ENCODE measurements at regions of chr2 and their contacts with region 1.

Region 1: DNA sequence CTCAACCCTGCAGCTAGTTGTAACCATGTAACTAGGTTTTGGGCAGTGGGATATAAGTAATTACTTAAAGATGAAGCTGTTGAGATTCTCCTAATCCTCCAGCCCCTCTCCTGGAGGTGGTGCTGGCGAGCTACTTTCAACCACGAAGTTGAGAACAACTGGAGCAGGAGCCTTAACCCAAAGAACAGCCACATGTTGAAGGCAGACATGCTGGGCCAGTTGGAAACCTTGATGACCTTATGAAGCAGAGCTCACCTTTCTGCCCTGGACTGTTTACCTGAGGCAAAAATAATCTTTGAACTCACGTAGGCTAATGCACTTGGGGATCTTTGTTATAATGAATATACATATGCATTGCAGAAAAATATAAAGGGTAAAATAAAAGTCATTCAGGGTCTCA is 89.6 kb upstream of the NPAS2 start:
- DNase-seq: no peak

Region 2: DNA sequence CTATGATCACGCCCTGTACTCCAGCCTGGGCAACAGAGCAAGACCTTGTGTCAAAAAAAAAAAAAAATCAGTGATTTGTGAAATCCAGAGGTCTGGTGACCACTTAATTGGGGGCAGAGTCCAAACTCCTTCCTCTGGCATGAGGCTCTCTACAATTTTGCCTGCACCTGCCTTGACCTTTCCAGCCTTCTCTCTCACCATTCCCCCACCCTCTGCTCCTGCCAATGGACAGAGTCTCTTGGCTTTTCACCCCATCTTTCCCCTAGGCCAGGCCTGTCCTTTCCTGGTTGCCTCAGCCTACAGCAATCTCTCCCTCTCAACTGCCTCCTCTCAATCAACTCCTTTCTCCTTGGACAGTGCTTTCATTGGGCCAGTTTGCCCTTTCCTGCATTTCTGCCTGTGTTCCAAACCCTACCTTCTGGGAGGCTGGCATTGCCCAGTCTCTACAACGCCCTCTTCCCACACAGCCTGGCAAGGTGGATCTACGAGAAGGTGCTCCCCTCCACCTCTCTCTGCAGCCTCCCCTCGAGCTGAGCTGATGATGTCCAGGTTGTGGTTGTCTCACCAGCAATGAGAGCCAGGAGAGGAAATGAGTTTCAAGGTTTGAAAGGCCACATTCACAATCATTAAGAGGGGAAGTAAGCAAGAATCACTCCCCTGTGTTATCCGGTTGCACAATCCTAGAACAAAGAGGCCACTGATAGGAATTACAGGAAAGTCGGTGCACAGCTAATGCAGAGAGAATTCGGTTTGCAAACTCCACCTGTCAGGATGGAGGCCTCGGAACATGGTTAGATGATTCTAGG is 50.1 kb after region 1 on chr2:
- intact Hi-C with region 1: loop called (anchors 2 kb)
- DNase-seq: no peak

Region 3: DNA sequence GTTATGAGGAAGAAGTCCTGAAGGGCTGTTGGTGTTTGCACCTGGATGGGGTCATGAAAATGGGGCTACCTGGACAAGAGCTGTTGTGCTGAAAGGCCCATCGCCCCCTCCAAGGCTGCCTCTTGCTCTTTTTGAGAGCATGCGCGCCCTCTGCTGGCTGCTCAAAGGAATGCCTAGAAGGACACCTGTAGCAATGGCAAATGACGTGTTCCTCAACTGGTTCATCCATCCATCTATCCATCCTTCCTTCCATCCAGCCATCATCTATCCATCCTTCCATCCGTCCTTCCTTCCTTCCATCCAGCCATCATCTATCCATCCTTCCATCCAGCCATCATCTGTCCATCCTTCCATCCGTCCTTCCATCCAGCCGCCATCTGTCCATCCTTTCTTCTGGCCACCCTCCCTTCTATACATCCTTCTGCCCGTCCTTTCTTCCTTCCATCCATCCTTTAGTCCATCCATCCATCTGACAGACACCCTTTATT is 254.6 kb after region 1 on chr2:
- intact Hi-C with region 1: loop called (anchors 1 kb)
- DNase-seq: peak; percentile 86

Region 4: GRCh38 chr2:101018934-101019333 is 288.6 kb after region 1 on chr2:
- intact Hi-C with region 1: no loop called
- DNase-seq: no peak

Measured in cardiac septum (tissue), 1 donor.